IMR-90 (cell line): ENCODE measurements at regions of chr11 and their contacts with region 1.

Region 1: DNA sequence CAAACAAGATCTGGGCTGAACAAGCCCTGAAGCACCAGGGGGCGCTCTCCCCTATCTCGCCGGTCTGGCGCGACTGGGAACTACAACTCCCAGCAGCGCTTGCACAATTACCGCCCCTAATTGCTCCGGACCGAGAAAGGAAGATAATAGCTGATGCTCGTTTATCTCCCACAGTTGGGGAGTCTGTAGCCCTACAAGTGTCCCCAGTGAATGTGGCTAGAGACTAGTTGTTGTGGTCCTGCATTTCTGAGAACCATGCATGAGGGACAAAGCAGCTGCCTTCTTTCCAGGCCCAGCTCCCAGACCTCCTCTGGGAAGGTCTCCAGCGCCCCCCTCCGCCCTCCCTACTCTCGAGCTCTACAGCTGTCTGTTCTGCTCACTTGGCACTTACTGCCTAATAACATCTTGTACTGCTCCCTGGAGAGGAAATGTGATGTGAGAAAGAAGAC is 34.4 kb downstream of the NRXN2 start:
- DNase-seq: peak; percentile 79
- ATAC-seq: peak; percentile 98
- H3K4me3 ChIP-seq: peak overlapping the region; percentile 59
- H3K27ac ChIP-seq: no peak overlapping the region
- H3K4me1 ChIP-seq: no peaks in the 10 kb centered on the region; the same call in 1 of the 2 replicates
- H3K27me3 ChIP-seq: peaks cover 63% of the 10 kb centered on the region
- CTCF ChIP-seq: peak; percentile 92
- POLR2A ChIP-seq: no peak
- RAD21 ChIP-seq: peak; percentile 68

Region 2: DNA sequence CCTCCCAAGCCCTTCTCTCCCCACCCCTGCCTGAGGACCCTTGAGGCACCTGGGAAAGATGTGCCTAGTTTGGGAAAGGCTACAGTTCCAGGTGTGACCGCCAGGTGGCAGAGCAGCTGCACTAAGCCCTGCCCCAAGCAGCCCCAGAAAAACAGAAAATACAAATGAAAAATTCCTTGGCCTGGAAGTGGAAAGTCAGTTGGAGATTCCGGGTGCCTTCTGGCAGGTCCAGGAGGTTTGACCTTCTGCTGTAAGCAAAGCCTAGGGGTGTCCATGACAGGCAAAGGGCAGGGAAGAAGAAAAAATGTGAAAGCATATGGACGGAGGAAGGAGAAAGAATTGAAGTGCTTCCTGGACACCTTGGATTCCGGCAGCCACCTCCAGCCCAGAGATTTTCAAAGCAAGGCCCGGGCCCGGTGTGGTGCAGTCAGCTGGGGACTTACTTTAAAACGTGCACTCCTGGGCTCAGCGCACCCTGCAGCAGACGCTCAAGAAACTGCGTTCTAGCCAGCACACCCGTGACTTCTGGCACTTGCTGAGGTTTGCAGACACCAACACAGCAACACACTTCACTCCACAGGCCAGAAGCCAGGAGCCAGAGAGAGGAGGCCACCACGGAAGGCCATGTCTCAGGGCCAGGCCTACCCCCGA is 134.9 kb before region 1 on chr11:
- CTCF ChIA-PET with region 1: no interaction called
- POLR2A ChIA-PET with region 1: no interaction called
- dilution Hi-C with region 1: no loop called
- in situ Hi-C with region 1: no loop called
- intact Hi-C with region 1: loop called (anchors 1 kb)
- DNase-seq: peak; percentile 22
- ATAC-seq: peak; percentile 89
- H3K4me3 ChIP-seq: no peak overlapping the region
- H3K27ac ChIP-seq: no peak overlapping the region
- H3K4me1 ChIP-seq: no peaks in the 10 kb centered on the region
- H3K27me3 ChIP-seq: peaks cover 13% of the 10 kb centered on the region
- CTCF ChIP-seq: peak; percentile 83
- POLR2A ChIP-seq: no peak
- RAD21 ChIP-seq: peak; percentile 79

Region 3: GRCh38 chr11:64705501-64705900 is 16.9 kb after region 1 on chr11:
- CTCF ChIA-PET with region 1: interaction called, 12 read pairs
- POLR2A ChIA-PET with region 1: no interaction called
- dilution Hi-C with region 1: no loop called
- in situ Hi-C with region 1: no loop called
- intact Hi-C with region 1: no loop called
- DNase-seq: no peak
- ATAC-seq: no peak
- H3K4me3 ChIP-seq: no peak overlapping the region
- H3K27ac ChIP-seq: no peak overlapping the region
- H3K4me1 ChIP-seq: no peaks in the 10 kb centered on the region
- H3K27me3 ChIP-seq: peaks cover 47% of the 10 kb centered on the region
- CTCF ChIP-seq: no peak
- POLR2A ChIP-seq: no peak
- RAD21 ChIP-seq: no peak

Region 4: DNA sequence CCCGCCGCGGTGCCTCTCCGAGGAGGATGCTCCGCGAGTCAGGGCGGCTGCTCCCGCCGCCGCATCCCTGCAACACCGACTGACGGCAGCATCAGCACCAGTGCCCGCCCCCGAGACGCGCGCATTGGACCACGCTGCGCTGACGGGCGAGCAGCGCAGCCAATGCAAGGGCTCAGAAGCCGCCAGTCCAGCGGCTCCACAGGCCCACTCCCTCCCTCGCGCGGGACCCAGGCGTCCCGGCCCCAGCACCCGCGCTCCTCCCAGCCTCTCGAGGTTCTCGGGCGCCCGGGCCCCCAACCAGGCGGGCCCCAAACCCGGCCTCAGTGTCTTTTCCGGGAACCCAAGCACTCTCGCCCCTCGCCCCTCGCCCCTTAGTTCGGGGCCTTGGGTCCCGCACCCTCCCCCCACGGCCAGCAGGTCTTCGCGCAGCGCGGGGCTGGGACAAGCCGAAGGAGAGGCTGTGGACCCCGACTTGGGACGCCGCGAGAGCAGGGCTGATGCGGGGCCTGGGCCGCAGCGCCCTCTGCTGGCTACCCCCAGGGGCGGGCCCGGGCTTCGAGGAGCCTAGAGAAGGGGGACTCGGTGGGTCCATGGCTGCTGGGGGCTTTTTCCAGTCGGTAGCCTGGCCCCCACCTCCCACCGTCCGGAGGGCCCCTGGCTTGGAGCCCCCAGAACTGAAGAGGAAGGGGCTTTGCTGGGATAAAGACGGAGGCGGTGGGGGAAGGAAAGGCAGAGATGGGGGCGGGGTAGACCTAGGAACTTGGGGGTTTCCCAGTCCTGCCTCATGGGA is 34.8 kb after region 1 on chr11 and contains the start of gene NRXN2:
- CTCF ChIA-PET with region 1: interaction called, 5 read pairs
- POLR2A ChIA-PET with region 1: no interaction called
- dilution Hi-C with region 1: no loop called
- in situ Hi-C with region 1: no loop called
- intact Hi-C with region 1: loop called (anchors 1 kb)
- DNase-seq: peak; percentile 70
- ATAC-seq: peak; percentile 100
- H3K4me3 ChIP-seq: peak within 1 kb of the TSS; percentile 49
- H3K27ac ChIP-seq: no peak within 1 kb of the TSS
- H3K4me1 ChIP-seq: no peaks in the 10 kb centered on the region
- H3K27me3 ChIP-seq: peaks cover 67% of the 10 kb centered on the region
- CTCF ChIP-seq: peak; percentile 84
- POLR2A ChIP-seq: no peak
- RAD21 ChIP-seq: peak; percentile 76
- total RNA-seq, gene NRXN2: 0.18 and 0.28 TPM in 2 replicates

Region 5: GRCh38 chr11:64767344-64768299 is 79.1 kb after region 1 on chr11:
- CTCF ChIA-PET with region 1: no interaction called
- POLR2A ChIA-PET with region 1: no interaction called
- dilution Hi-C with region 1: no loop called
- in situ Hi-C with region 1: no loop called
- intact Hi-C with region 1: loop called (anchors 2 kb)
- DNase-seq: peak; percentile 60
- ATAC-seq: peak; percentile 53
- H3K4me3 ChIP-seq: no peak overlapping the region
- H3K27ac ChIP-seq: no peak overlapping the region
- H3K4me1 ChIP-seq: peaks cover 13% of the 10 kb centered on the region
- H3K27me3 ChIP-seq: no peaks in the 10 kb centered on the region
- CTCF ChIP-seq: peak; percentile 63
- POLR2A ChIP-seq: no peak
- RAD21 ChIP-seq: peak; percentile 29; the same call in 1 of the 2 replicates